ENCODE measurements at regions of chr10 and their contacts with region 1.

Region 1: GRCh38 chr10:33330543-33331378 is 3.7 kb downstream of the NRP1 start:
- DNase-seq: no peak
- ATAC-seq: peak; percentile 53; the same call in 1 of the 2 replicates
- H3K4me3 ChIP-seq: peak overlapping the region; percentile 61 to 95
- H3K27ac ChIP-seq: peak overlapping the region; percentile 88
- H3K4me1 ChIP-seq: peaks cover 40% of the 10 kb centered on the region
- H3K27me3 ChIP-seq: no peaks in the 10 kb centered on the region
- CTCF ChIP-seq: peak; percentile 85

Region 2: GRCh38 chr10:33273295-33274002 is 57.3 kb before region 1 on chr10:
- CTCF ChIA-PET with region 1: no interaction called
- POLR2A ChIA-PET with region 1: no interaction called
- in situ Hi-C with region 1: no loop called
- intact Hi-C with region 1: loop called (anchors 2 kb)
- DNase-seq: peak; percentile 84
- ATAC-seq: peak; percentile 86
- H3K4me3 ChIP-seq: peak overlapping the region; percentile 14 to 35
- H3K27ac ChIP-seq: peak overlapping the region; percentile 100
- H3K4me1 ChIP-seq: peaks cover 69% of the 10 kb centered on the region
- H3K27me3 ChIP-seq: no peaks in the 10 kb centered on the region
- CTCF ChIP-seq: no peak

Region 3: DNA sequence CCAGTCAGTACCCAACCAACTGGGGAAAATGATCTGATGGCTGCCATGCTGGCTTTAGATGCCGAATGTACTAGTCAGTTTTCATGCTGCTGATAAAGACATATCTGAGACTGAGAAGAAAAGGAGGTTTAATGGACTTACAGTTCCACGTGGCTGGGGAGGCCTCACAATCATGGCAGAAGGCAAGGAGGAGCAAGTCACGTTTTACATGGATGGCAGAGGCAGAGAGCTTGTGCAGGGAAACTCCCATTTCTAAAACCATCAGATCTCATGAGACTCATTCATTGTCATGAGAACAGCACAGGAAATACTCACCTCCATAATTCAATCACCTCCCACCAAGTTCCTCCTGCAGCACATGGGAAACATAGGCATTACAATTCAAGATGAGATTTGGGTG is 512.6 kb after region 1 on chr10:
- CTCF ChIA-PET with region 1: interaction called, 14 read pairs
- POLR2A ChIA-PET with region 1: no interaction called
- in situ Hi-C with region 1: no loop called
- intact Hi-C with region 1: no loop called
- DNase-seq: no peak
- ATAC-seq: no peak
- H3K4me3 ChIP-seq: no peak overlapping the region
- H3K27ac ChIP-seq: no peak overlapping the region
- H3K4me1 ChIP-seq: no peaks in the 10 kb centered on the region
- H3K27me3 ChIP-seq: no peaks in the 10 kb centered on the region
- CTCF ChIP-seq: no peak

Region 4: GRCh38 chr10:34037499-34037898 is 706.7 kb after region 1 on chr10:
- CTCF ChIA-PET with region 1: no interaction called
- POLR2A ChIA-PET with region 1: interaction called, 14 read pairs
- in situ Hi-C with region 1: no loop called
- intact Hi-C with region 1: no loop called
- DNase-seq: no peak
- ATAC-seq: no peak
- H3K4me3 ChIP-seq: no peak overlapping the region
- H3K27ac ChIP-seq: no peak overlapping the region
- H3K4me1 ChIP-seq: no peaks in the 10 kb centered on the region
- H3K27me3 ChIP-seq: no peaks in the 10 kb centered on the region
- CTCF ChIP-seq: no peak

Region 5: GRCh38 chr10:34522546-34522945 is 1191.8 kb after region 1 on chr10:
- CTCF ChIA-PET with region 1: no interaction called
- POLR2A ChIA-PET with region 1: no interaction called
- in situ Hi-C with region 1: no loop called
- intact Hi-C with region 1: loop called (anchors 10 kb)
- DNase-seq: no peak
- ATAC-seq: no peak
- H3K4me3 ChIP-seq: no peak overlapping the region
- H3K27ac ChIP-seq: 0 out of 2 replicates have a peak overlapping the region, but pooled peaks have one; percentile 29
- H3K4me1 ChIP-seq: peaks cover 14% of the 10 kb centered on the region
- H3K27me3 ChIP-seq: no peaks in the 10 kb centered on the region
- CTCF ChIP-seq: peak; percentile 48; the same call in 1 of the 2 replicates

Region 6: DNA sequence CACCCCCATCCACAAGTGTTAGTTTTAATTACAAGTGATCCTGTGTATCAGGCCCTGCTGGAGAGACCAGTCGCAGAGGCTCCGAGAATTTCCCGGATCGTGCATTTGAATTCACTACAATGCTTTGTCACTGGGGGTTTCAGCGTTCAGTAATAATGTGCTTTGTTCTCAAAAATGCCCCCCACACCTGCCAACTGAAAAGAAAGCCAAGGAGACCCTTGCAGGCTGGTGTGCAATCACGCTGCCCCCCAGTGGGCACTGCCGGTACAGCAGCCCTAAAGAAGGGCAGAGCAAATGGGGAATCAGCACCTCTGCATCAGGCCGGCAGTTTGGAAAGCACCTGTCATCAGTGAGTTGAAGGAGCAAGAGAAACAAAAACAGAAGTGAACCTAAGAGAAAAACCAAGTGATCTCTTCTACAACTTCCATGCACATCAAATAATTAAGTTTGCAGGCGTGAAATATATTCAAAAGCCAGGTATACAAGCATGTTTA is 1306.7 kb after region 1 on chr10:
- CTCF ChIA-PET with region 1: no interaction called
- POLR2A ChIA-PET with region 1: no interaction called
- in situ Hi-C with region 1: no loop called
- intact Hi-C with region 1: loop called (anchors 5 kb)
- DNase-seq: peak; percentile 45
- ATAC-seq: peak; percentile 71; the same call in 1 of the 2 replicates
- H3K4me3 ChIP-seq: no peak overlapping the region
- H3K27ac ChIP-seq: peak overlapping the region; percentile 23; the same call in 1 of the 2 replicates
- H3K4me1 ChIP-seq: peaks cover 8% of the 10 kb centered on the region; the same call in 1 of the 2 replicates
- H3K27me3 ChIP-seq: no peaks in the 10 kb centered on the region
- CTCF ChIP-seq: peak; percentile 92